ENCODE measurements at regions of chr9 and their contacts with region 1.

Region 1: DNA sequence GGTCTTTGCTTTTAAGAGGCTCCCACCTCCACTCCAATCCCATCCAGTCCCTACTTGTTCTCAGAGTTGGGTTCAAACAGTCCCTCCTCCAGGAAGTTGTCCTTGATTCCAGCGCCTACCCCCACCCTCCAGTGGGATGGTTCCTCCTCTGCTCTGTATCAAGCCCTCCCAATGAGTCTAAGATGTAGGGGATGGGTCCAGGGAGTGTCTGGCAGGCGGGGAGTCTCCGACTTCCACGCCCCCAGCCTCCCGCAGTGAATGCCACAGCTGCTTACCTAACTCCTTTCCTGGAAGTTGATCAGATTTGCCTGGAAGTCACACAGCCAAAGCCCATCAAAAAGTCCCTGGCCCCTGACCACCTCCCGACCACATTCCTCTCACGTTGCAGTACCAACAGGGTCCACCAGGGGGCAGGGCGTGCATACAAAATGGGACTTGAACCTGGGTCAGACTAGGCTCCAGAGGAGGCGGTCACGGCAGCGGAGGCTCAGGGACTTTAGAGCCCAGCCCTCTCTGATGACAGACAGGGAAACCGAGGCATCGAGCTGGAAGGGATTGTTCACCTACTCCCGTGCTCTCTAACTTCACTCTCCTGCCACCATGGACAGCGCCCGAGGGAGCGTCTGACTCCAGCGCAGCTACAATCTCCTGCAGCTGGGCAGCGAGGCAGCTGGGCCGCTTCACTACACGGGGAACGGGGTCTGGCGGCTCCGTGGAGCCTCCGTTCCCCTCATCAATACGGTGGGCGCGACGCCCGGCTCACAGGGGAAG is 25.0 kb upstream of the TDRD7 start:
- DNase-seq: peak; percentile 74
- ATAC-seq: peak; percentile 77
- H3K4me3 ChIP-seq: peak overlapping the region in 1 of 5 experiments; percentile 6
- H3K4me3 Mint-ChIP-seq: no peak overlapping the region
- H3K27ac ChIP-seq: no peak overlapping the region
- H3K27ac Mint-ChIP-seq: no peak overlapping the region
- H3K4me1 ChIP-seq: peaks cover 15% of the 10 kb centered on the region in 2 donors
- H3K4me1 Mint-ChIP-seq: peaks cover 18% of the 10 kb centered on the region
- H3K27me3 ChIP-seq: peaks cover 0 to 28% (median 0%) of the 10 kb centered on the region in 4 experiments
- H3K27me3 Mint-ChIP-seq: peaks cover 10% of the 10 kb centered on the region
- CTCF ChIP-seq: peak; percentile 99

Region 2: GRCh38 chr9:97398999-97399758 is 12.3 kb after region 1 on chr9:
- CTCF ChIA-PET with region 1: interaction called, 37 read pairs
- POLR2A ChIA-PET with region 1: no interaction called
- intact Hi-C with region 1: loop called (anchors 1 kb)
- DNase-seq: peak; percentile 77
- ATAC-seq: peak; percentile 90
- H3K4me3 ChIP-seq: no peak overlapping the region
- H3K4me3 Mint-ChIP-seq: no peak overlapping the region
- H3K27ac ChIP-seq: no peak overlapping the region
- H3K27ac Mint-ChIP-seq: no peak overlapping the region
- H3K4me1 ChIP-seq: no peaks in the 10 kb centered on the region
- H3K4me1 Mint-ChIP-seq: no peaks in the 10 kb centered on the region
- H3K27me3 ChIP-seq: peaks cover 0 to 8% (median 0%) of the 10 kb centered on the region in 4 experiments
- H3K27me3 Mint-ChIP-seq: peaks cover 6% of the 10 kb centered on the region
- CTCF ChIP-seq: peak; percentile 98

Region 3: GRCh38 chr9:97406620-97407177 is 19.8 kb after region 1 on chr9:
- CTCF ChIA-PET with region 1: interaction called, 24 read pairs
- POLR2A ChIA-PET with region 1: no interaction called
- intact Hi-C with region 1: loop called (anchors 1 kb)
- DNase-seq: no peak
- ATAC-seq: no peak
- H3K4me3 ChIP-seq: no peak overlapping the region
- H3K4me3 Mint-ChIP-seq: no peak overlapping the region
- H3K27ac ChIP-seq: no peak overlapping the region
- H3K27ac Mint-ChIP-seq: no peak overlapping the region
- H3K4me1 ChIP-seq: peaks cover 5 to 6% of the 10 kb centered on the region in 2 donors
- H3K4me1 Mint-ChIP-seq: peaks cover 14% of the 10 kb centered on the region
- H3K27me3 ChIP-seq: peaks cover 0 to 5% (median 0%) of the 10 kb centered on the region in 4 experiments
- H3K27me3 Mint-ChIP-seq: peaks cover 12% of the 10 kb centered on the region
- CTCF ChIP-seq: no peak

Region 4: DNA sequence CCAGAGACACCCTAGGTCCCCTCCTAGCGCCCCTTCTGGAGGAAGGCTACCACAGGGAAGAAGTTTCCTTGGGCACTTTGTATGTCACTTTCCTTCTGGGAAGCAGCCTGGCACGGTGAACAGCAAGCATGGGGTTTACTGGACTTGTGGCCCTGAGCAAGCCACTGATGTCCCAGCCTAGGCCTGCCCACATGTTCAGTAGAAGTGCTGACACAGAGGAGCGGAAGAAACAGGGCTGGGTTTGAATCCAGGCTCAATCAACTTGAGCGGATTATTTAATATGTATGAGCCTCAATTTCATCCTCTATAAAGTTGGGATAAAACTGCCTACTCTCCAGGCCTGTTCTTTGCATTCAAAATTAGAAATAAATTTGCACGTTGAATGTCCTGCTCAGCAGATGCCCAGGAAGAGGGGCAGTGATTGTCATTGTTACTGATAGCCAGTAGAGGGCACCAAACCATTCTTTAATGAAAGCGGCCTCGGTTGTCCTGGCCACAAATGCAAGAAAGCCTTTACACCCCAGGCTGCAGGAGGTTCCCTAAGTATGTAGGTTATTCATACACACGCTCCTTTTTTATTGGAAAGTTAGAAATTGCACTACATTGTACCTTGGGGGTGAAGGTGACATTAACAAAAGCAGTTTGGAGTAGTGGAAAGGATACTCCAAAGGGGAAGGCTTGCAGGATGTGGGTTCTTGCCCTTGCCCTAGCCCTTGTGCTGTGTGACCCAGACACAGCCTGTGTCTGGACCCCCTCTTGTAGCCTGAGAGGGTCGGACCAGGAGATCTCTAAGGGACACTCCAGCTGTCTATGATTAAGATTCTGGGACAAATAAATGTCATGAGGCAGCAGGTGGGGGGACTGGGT is 323.7 kb after region 1 on chr9:
- CTCF ChIA-PET with region 1: no interaction called
- POLR2A ChIA-PET with region 1: no interaction called
- intact Hi-C with region 1: no loop called
- DNase-seq: peak; percentile 78
- ATAC-seq: peak; percentile 91
- H3K4me3 ChIP-seq: no peak overlapping the region
- H3K4me3 Mint-ChIP-seq: no peak overlapping the region
- H3K27ac ChIP-seq: no peak overlapping the region
- H3K27ac Mint-ChIP-seq: no peak overlapping the region
- H3K4me1 ChIP-seq: peaks cover 4 to 5% of the 10 kb centered on the region in 2 donors
- H3K4me1 Mint-ChIP-seq: peaks cover 6% of the 10 kb centered on the region
- H3K27me3 ChIP-seq: peaks cover 0 to 28% (median 7%) of the 10 kb centered on the region in 4 experiments
- H3K27me3 Mint-ChIP-seq: peaks cover 53% of the 10 kb centered on the region
- CTCF ChIP-seq: peak; percentile 89